ENCODE measurements at regions of chr10 and their contacts with region 1.

Region 1: GRCh38 chr10:511101-511848 is 178.2 kb downstream of the DIP2C start:
- DNase-seq: peak; percentile 81
- H3K4me3 ChIP-seq: no peak overlapping the region
- H3K27ac ChIP-seq: no peak overlapping the region
- H3K4me1 ChIP-seq: no peaks in the 10 kb centered on the region
- H3K27me3 ChIP-seq: no peaks in the 10 kb centered on the region
- CTCF ChIP-seq: peak; percentile 73 to 88

Region 2: GRCh38 chr10:178208-178607 is 333.1 kb before region 1 on chr10:
- CTCF ChIA-PET with region 1: no interaction called
- dilution Hi-C with region 1: no loop called
- in situ Hi-C with region 1: no loop called
- intact Hi-C with region 1: loop called (anchors 2 kb)
- DNase-seq: peak; percentile 19
- H3K4me3 ChIP-seq: no peak overlapping the region
- H3K27ac ChIP-seq: no peak overlapping the region
- H3K4me1 ChIP-seq: no peaks in the 10 kb centered on the region
- H3K27me3 ChIP-seq: no peaks in the 10 kb centered on the region
- CTCF ChIP-seq: peak; percentile 21 to 37

Region 3: DNA sequence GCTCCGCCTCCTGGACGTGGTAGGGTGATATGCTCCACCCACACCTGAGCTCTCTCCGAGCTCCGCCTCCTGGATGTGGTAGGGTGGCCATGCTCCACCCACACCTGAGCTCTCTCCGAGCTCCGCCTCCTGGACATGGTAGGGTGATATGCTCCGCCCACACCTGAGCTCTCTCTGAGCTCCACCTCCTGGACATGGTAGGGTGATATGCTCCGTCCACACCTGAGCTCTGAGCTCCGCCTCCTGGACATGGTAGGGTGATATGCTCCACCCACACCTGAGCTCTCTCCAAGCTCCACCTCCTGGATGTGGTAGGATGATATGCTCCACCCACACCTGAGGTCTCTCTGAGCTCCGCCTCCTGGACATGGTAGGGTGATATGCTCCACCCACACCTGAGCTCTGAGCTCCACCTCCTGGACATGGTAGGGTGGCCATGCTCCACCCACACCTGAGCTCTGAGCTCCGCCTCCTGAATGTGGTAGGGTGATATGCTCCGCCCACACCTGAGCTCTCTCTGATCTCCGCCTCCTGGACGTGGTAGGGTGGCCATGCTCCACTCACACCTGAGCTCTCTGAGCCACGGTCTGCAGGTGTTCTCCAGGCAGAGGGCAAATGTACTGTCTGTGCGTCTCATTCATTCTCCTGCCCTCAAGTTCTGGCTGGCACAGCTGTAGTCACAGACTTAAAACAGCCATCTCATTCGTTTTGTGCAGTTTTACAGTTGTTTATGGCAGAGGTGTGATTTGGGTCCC is 74.2 kb before region 1 on chr10:
- CTCF ChIA-PET with region 1: no interaction called
- dilution Hi-C with region 1: loop called (anchors 5 kb)
- in situ Hi-C with region 1: no loop called
- intact Hi-C with region 1: no loop called
- DNase-seq: no peak
- H3K4me3 ChIP-seq: no peak overlapping the region
- H3K27ac ChIP-seq: no peak overlapping the region
- H3K4me1 ChIP-seq: no peaks in the 10 kb centered on the region
- H3K27me3 ChIP-seq: no peaks in the 10 kb centered on the region
- CTCF ChIP-seq: no peak

Region 4: DNA sequence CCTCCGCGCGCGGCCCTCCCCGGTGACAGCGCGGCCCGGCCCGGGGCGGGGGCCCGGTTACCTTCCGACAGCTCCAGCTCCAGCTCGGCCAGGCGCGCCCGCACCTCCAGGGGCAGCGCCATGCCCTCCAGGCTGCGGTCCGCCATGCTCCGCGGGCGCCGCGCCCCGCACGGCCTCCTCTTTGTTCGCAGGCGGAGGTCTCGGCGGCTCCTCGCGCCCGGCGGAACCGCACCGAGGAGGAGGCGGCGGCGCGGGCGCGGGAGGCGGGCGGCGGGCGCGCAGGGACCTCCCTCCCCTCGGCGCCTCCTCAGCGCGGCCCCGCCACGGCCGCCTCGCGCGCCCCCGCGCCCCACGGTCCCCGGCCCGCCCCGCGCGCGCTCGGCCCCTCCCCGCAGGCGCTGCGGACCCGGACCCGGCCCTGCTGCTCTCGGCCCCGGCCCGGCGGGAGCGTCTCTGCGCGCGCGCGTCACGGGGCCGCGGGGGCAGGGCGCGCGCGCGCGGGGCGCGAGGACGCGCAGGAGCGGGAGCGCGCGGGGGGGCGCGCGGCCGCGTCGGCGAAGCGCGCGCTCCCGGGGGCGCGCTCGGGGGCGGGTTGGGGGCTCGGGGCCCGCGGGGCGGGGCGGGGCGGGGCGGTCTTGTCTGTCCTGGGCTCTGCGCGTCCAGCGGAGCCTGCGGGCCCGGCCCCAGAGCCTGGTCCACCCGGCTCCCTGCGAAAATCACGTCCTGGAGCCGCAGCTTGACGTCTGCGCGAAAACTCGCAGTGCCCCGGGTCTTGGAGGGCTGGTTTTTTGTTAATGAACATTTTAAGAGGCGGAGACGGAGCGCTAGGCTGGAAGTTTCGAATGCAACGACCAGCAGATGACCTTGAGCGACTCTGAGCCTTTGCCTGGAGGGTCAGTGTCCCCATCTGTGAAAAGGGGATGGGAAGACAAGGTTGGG is 178.4 kb after region 1 on chr10 and contains the start of gene DIP2C:
- CTCF ChIA-PET with region 1: no interaction called
- dilution Hi-C with region 1: no loop called
- in situ Hi-C with region 1: loop called in 1 of 2 experiments (anchors 10 kb)
- intact Hi-C with region 1: loop called (anchors 2 kb)
- DNase-seq: peak; percentile 47
- H3K4me3 ChIP-seq: no peak within 1 kb of the TSS
- H3K27ac ChIP-seq: no peak within 1 kb of the TSS
- H3K4me1 ChIP-seq: no peaks in the 10 kb centered on the region
- H3K27me3 ChIP-seq: peaks cover 2% of the 10 kb centered on the region
- CTCF ChIP-seq: no peak
- total RNA-seq, gene DIP2C: 7.1 to 7.3 TPM

Region 5: DNA sequence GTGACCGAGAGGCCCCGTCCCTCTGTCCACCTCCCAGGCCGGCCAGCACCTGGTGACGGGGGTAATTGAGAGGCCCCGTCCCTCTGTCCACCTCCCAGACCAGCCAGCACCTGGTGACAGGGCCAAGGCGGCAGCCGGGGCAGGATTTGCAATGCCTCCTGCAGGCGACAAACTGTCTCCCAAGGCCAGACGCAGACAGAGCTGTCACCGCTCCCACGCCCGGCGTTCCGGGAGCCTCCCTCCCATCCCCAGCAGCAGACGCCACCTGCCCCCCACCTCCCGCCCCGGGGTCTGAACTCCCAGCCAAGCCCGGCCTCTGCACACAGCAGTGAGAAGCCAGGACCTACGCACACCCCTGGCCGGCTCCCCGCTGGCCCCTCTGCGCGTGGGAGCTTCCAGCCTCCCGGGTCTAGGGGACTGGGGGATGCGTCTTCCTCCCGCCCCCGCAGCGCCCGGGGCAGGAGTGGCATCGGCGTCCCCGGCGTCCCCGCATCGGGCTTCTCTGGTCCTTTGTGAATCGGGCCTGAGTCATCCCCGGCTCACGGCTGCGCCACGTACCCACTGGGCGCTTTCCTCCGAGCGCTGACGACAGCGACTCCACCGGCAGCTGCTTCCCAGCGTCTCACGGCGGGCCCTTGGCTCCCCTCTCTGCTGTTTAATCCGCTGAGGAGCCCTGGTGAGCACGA is 273.3 kb after region 1 on chr10:
- CTCF ChIA-PET with region 1: interaction called, 3 read pairs
- dilution Hi-C with region 1: no loop called
- in situ Hi-C with region 1: loop called in 1 of 2 experiments (anchors 25 kb)
- intact Hi-C with region 1: loop called (anchors 1 kb)
- DNase-seq: peak; percentile 58
- H3K4me3 ChIP-seq: peak overlapping the region; percentile 11 to 29 (median 28)
- H3K27ac ChIP-seq: no peak overlapping the region
- H3K4me1 ChIP-seq: peaks cover 2% of the 10 kb centered on the region
- H3K27me3 ChIP-seq: peaks cover 7% of the 10 kb centered on the region
- CTCF ChIP-seq: peak in 1 of 2 donors; percentile 29

Region 6: GRCh38 chr10:794466-794865 is 283.2 kb after region 1 on chr10:
- CTCF ChIA-PET with region 1: no interaction called
- dilution Hi-C with region 1: no loop called
- in situ Hi-C with region 1: loop called (anchors 5 to 25 kb)
- intact Hi-C with region 1: loop called (anchors 1 kb)
- DNase-seq: no peak
- H3K4me3 ChIP-seq: no peak overlapping the region
- H3K27ac ChIP-seq: no peak overlapping the region
- H3K4me1 ChIP-seq: peaks cover 3% of the 10 kb centered on the region
- H3K27me3 ChIP-seq: no peaks in the 10 kb centered on the region
- CTCF ChIP-seq: peak in 1 of 2 donors; percentile 10

Region 7: GRCh38 chr10:1074748-1075308 is 563.6 kb after region 1 on chr10:
- CTCF ChIA-PET with region 1: no interaction called
- dilution Hi-C with region 1: no loop called
- in situ Hi-C with region 1: no loop called
- intact Hi-C with region 1: loop called (anchors 10 kb)
- DNase-seq: no peak
- H3K4me3 ChIP-seq: no peak overlapping the region
- H3K27ac ChIP-seq: no peak overlapping the region
- H3K4me1 ChIP-seq: peaks cover 3% of the 10 kb centered on the region
- H3K27me3 ChIP-seq: no peaks in the 10 kb centered on the region
- CTCF ChIP-seq: peak; percentile 28 to 34

Region 8: GRCh38 chr10:1382711-1383110 is 871.4 kb after region 1 on chr10:
- CTCF ChIA-PET with region 1: no interaction called
- dilution Hi-C with region 1: no loop called
- in situ Hi-C with region 1: no loop called
- intact Hi-C with region 1: no loop called
- DNase-seq: no peak
- H3K4me3 ChIP-seq: no peak overlapping the region
- H3K27ac ChIP-seq: no peak overlapping the region
- H3K4me1 ChIP-seq: no peaks in the 10 kb centered on the region
- H3K27me3 ChIP-seq: no peaks in the 10 kb centered on the region
- CTCF ChIP-seq: no peak

Measured in mammary epithelial cell (primary cell).